ENCODE measurements at regions of chr3 and their contacts with region 1.

Region 1: GRCh38 chr3:124772081-124772831 is 42.0 kb downstream of the UMPS start:
- DNase-seq: no peak
- H3K4me3 ChIP-seq: no peak overlapping the region
- H3K27ac ChIP-seq: peak overlapping the region; percentile 71
- H3K4me1 ChIP-seq: peaks cover 49% of the 10 kb centered on the region
- H3K27me3 ChIP-seq: no peaks in the 10 kb centered on the region
- CTCF ChIP-seq: no peak
- POLR2A ChIP-seq: no peak

Region 2: GRCh38 chr3:124007186-124007585 is 765.1 kb before region 1 on chr3:
- intact Hi-C with region 1: no loop called
- DNase-seq: peak in 1 of 2 donors; percentile 6
- H3K4me3 ChIP-seq: no peak overlapping the region
- H3K27ac ChIP-seq: no peak overlapping the region
- H3K4me1 ChIP-seq: no peaks in the 10 kb centered on the region
- H3K27me3 ChIP-seq: no peaks in the 10 kb centered on the region
- CTCF ChIP-seq: no peak
- POLR2A ChIP-seq: no peak

Region 3: DNA sequence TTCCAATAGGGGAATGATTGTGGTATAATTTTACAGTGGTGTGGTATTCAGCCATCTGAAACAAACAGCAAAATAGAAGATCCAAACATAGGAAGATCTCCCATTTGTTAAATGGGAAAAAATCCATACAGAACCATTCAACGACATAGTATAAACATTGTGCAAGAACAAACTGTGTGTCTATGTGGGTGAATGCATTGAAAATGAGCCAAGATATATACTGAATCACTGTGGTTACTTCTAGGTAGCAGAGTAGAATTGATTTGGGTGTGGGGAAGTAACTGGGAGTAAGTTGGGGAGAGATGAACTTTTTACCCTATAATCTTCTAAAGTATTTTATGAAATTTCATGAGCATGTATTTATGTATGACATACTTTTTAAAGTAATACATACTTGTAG is 165.1 kb before region 1 on chr3:
- intact Hi-C with region 1: no loop called
- DNase-seq: no peak
- H3K4me3 ChIP-seq: no peak overlapping the region
- H3K27ac ChIP-seq: no peak overlapping the region
- H3K4me1 ChIP-seq: no peaks in the 10 kb centered on the region
- H3K27me3 ChIP-seq: no peaks in the 10 kb centered on the region
- CTCF ChIP-seq: no peak
- POLR2A ChIP-seq: no peak

Region 4: DNA sequence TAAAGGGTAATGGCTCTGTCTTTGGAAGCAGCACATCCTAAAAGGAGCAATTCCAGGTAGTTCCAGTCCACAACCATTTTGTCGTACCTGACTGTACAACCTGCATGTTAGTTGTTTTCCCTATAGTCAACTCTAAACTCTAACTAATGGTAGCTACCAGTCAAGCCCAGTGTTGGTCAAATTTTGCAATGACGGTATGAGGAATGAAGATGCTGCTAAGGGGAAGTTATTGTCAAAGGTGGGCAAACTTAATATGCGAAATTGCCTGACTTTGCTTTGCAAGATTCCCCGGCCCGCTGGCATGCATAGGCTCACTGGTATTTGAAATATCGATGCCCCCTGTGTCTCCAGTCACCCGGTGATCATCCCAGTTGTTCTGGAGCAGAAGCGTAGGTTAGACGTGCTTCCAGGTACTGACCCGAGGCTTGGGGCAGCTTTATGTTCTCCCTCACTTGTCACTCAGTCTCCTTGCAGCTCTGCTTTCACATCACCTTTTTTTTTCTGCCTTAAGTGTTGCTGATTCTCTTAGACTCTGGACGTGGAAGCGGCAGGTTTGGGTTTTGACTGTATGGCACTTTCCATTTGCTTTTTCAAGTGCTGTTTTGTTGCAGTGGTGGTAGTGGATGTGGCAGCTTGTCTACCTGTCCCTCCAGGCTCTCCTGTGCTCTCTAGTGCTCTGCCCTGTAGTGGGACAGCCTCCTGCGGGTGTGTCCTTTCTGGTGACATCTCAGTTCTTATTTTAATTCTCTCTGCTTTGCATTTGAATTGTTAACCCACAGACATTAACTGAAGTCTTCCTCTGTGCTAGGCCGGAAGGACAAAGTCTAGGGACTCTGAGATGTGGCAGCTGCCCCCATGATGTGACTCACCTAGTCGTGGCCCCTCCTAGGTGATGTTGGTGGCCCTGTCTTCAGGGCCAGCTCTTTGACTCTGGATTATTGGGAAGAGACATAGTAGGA is 137.8 kb before region 1 on chr3:
- intact Hi-C with region 1: no loop called
- DNase-seq: no peak
- H3K4me3 ChIP-seq: no peak overlapping the region
- H3K27ac ChIP-seq: no peak overlapping the region
- H3K4me1 ChIP-seq: no peaks in the 10 kb centered on the region
- H3K27me3 ChIP-seq: no peaks in the 10 kb centered on the region
- CTCF ChIP-seq: no peak
- POLR2A ChIP-seq: no peak

Region 5: GRCh38 chr3:124878561-124879336 is 106.5 kb after region 1 on chr3:
- intact Hi-C with region 1: no loop called
- DNase-seq: no peak
- H3K4me3 ChIP-seq: no peak overlapping the region
- H3K27ac ChIP-seq: peak overlapping the region; percentile 27
- H3K4me1 ChIP-seq: peaks cover 84% of the 10 kb centered on the region
- H3K27me3 ChIP-seq: no peaks in the 10 kb centered on the region
- CTCF ChIP-seq: no peak
- POLR2A ChIP-seq: no peak

Region 6: DNA sequence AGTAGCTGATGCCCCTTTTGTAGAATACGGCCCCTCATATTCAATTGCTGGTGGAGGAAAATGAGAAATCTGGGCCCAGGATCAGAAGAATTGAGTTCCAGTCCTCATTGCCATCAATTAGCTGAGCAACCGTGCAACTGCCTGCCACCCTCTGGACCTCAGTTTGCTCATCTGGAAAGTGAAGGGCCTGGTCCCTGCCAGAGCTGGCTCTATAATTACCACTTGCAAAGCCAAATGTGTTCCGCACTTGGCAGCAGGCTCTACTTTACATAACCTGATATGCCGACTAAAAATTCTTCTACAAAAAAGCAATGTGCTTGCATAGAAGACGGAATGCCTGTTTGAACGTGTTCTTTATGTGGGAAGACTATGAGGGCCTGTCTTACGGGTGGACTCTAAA is 123.5 kb after region 1 on chr3:
- intact Hi-C with region 1: loop called (anchors 5 kb)
- DNase-seq: no peak
- H3K4me3 ChIP-seq: no peak overlapping the region
- H3K27ac ChIP-seq: no peak overlapping the region
- H3K4me1 ChIP-seq: peaks cover 15% of the 10 kb centered on the region
- H3K27me3 ChIP-seq: no peaks in the 10 kb centered on the region
- CTCF ChIP-seq: no peak
- POLR2A ChIP-seq: no peak

Measured in vagina (tissue), 2 donors.